Activated CD4-positive, alpha-beta T cell treated with anti-CD3 and anti-CD28 coated beads, Interleukin-2, amount 10 ng/mL, durations not matched to agents 24 days and 14 days (primary cell): ENCODE measurements at regions of chr3 and their contacts with region 1.

Region 1: GRCh38 chr3:71478568-71478967 is 105.0 kb downstream of the FOXP1 start:
- DNase-seq: peak; percentile 78
- H3K4me3 Mint-ChIP-seq: no peak overlapping the region
- H3K27ac Mint-ChIP-seq: peak overlapping the region; percentile 82
- H3K4me1 Mint-ChIP-seq: peaks cover 22% of the 10 kb centered on the region
- H3K27me3 Mint-ChIP-seq: no peaks in the 10 kb centered on the region

Region 2: DNA sequence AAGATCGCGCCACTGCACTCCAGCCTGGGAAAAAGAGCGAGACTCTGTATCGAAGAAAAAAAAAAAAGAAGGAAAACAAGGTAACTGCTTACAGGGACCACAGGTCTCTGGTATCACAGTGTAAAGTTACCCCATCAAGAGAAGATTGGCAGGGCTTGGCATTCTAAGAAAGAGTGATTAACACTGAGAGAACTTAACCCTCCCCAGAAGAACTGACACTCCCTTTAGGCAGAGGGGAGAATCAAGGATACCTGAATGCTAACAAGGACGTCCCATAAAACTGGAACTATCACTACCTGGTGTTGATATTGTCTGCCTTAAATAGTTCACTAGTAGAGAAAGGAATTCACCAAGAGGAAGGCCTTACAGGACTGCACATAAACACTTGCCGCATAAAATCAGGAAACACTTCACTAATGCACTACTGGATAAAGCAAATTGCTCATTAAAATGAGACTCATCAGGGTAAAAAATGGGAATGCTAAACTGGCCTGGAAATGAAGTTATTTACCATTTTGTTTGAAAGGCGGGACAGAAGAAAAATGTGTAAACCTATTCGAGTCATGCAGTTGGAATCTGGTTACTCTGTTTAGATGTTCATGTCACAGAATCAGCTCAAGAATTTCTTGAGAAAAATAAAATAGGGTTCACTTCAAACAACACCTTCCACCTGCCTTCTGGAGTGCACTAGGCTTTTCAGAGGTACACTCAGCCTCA is 16.7 kb before region 1 on chr3:
- intact Hi-C with region 1: loop called (anchors 2 kb)
- DNase-seq: no peak
- H3K4me3 Mint-ChIP-seq: no peak overlapping the region
- H3K27ac Mint-ChIP-seq: peak overlapping the region; percentile 79
- H3K4me1 Mint-ChIP-seq: peaks cover 24% of the 10 kb centered on the region
- H3K27me3 Mint-ChIP-seq: peaks cover 10% of the 10 kb centered on the region